HEK293 (cell line): ENCODE measurements at regions of chr5 and their contacts with region 1.

Region 1: DNA sequence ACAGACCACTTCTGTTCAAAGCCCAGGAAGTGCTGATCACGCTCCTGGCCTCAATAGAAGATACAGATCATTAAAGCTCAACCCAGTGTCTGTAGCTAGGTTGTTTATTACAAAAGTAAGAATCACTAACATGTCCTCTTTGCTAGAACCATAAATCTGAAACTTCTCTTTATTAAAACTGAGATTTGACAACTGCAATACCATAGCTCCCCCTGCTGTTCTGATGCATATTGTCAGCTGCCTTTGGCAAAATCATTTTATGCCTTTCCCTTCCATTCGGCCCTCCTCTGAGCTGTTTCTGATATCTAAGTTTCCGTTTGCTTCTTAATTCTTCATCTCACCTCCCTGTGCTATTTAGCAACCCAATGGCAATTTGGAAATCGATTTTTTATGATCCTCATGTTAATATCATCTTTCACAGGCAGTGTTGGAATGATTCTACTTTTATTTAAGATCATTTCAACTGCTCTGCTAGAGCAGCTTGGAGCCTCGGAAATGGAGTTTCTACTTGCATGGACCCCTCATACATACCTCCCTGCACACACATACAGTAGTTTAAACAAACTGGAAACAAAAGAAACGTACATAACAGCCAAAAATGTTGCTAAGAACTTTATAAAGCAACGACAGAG is 998.8 kb downstream of the MAT2B start:
- H3K4me3 ChIP-seq: no peak overlapping the region
- H3K27ac ChIP-seq: no peak overlapping the region
- H3K4me1 ChIP-seq: no peaks in the 10 kb centered on the region
- CTCF ChIP-seq: peak; percentile 14; the same call in 1 of the 2 replicates

Region 2: DNA sequence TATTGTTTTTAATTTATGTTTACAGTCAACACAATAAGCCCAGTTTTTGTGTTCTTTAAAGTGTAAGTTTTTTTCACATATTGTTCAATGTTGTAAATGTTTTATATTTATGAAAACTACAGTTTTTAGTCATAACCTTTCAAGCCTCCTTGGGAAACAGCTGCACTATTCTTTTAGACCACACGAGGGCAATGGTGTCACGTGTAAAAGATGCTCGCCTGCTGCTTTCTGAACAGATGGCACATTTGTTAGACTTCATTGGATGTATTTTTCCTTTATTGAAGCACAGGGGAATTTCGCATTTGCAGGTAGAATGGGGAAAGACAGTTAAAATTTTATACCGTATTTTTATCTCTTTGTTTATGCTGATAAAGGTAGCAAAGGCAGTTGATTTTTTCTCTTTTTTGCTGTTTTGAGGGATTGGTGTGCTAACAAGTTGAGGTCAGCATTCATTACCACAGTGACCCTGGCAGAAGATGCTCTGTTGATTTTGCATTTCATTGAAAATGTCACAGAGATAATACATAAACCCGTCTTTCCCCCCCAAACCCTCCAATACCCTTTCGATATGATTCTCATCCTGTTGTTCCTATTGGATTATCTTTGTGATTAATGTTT is 939.8 kb before region 1 on chr5:
- CTCF ChIA-PET with region 1: interaction called, 32 read pairs
- POLR2A ChIA-PET with region 1: no interaction called
- H3K4me3 ChIP-seq: no peak overlapping the region
- H3K27ac ChIP-seq: no peak overlapping the region
- H3K4me1 ChIP-seq: no peaks in the 10 kb centered on the region
- CTCF ChIP-seq: peak; percentile 66

Region 3: GRCh38 chr5:163695830-163696578 is 808.3 kb before region 1 on chr5:
- CTCF ChIA-PET with region 1: interaction called, 23 read pairs
- POLR2A ChIA-PET with region 1: no interaction called
- H3K4me3 ChIP-seq: no peak overlapping the region
- H3K27ac ChIP-seq: no peak overlapping the region
- H3K4me1 ChIP-seq: no peaks in the 10 kb centered on the region
- CTCF ChIP-seq: peak; percentile 42; the same call in 1 of the 2 replicates

Region 4: GRCh38 chr5:164013077-164013670 is 491.1 kb before region 1 on chr5:
- CTCF ChIA-PET with region 1: interaction called, 14 read pairs
- POLR2A ChIA-PET with region 1: no interaction called
- H3K4me3 ChIP-seq: no peak overlapping the region
- H3K27ac ChIP-seq: no peak overlapping the region
- H3K4me1 ChIP-seq: no peaks in the 10 kb centered on the region
- CTCF ChIP-seq: no peak

Region 5: GRCh38 chr5:164578911-164579310 is 74.7 kb after region 1 on chr5:
- CTCF ChIA-PET with region 1: no interaction called
- POLR2A ChIA-PET with region 1: no interaction called
- H3K4me3 ChIP-seq: no peak overlapping the region
- H3K27ac ChIP-seq: no peak overlapping the region
- H3K4me1 ChIP-seq: no peaks in the 10 kb centered on the region
- CTCF ChIP-seq: no peak